Left cardiac atrium (tissue), 4 donors: ENCODE measurements at regions of chr1 and their contacts with region 1.

Region 1: GRCh38 chr1:159936273-159936904 is 9.0 kb downstream of the IGSF9 start:
- DNase-seq: peak; percentile 78
- ATAC-seq: peak; percentile 67 to 75

Region 2: GRCh38 chr1:160006312-160006940 is 70.0 kb after region 1 on chr1:
- intact Hi-C with region 1: loop called (anchors 1 to 2 kb)
- DNase-seq: peak; percentile 75
- ATAC-seq: peak in 1 of 2 donors; percentile 88

Region 3: GRCh38 chr1:160558660-160559380 is 622.4 kb after region 1 on chr1:
- intact Hi-C with region 1: no loop called
- DNase-seq: no peak
- ATAC-seq: no peak